Naive thymus-derived CD4-positive, alpha-beta T cell (primary cell): ENCODE measurements at regions of chr3 and their contacts with region 1.

Region 1: GRCh38 chr3:9792405-9793160 is at the starts of genes ARPC4 and TADA3:
- DNase-seq: peak; percentile 83 to 96 (median 93)
- ATAC-seq: peak; percentile 92
- H3K4me3 ChIP-seq: peak within 1 kb of the TSS; percentile 81
- H3K4me3 Mint-ChIP-seq: peak within 1 kb of the TSS; percentile 90 to 100 (median 98)
- H3K27ac ChIP-seq: peak within 1 kb of the TSS; percentile 98
- H3K27ac Mint-ChIP-seq: peak within 1 kb of the TSS; percentile 97 to 100 (median 99)
- H3K4me1 ChIP-seq: peaks cover 47% of the 10 kb centered on the region in 2 donors
- H3K4me1 Mint-ChIP-seq: peaks cover 45 to 75% (median 63%) of the 10 kb centered on the region in 7 donors
- H3K27me3 ChIP-seq: no peaks in the 10 kb centered on the region
- H3K27me3 Mint-ChIP-seq: no peaks in the 10 kb centered on the region
- total RNA-seq, gene ARPC4: 128 to 273 (median 129) TPM
- total RNA-seq, gene TADA3: 31.6 to 67.4 (median 36.8) TPM

Region 2: GRCh38 chr3:9503283-9503682 is 289.3 kb before region 1 on chr3:
- CTCF ChIA-PET with region 1: no interaction called
- POLR2A ChIA-PET with region 1: no interaction called
- intact Hi-C with region 1: loop called in 1 of 2 experiments (anchors 10 kb)
- DNase-seq: peak; percentile 38 to 71 (median 60)
- ATAC-seq: peak; percentile 71
- H3K4me3 ChIP-seq: no peak overlapping the region
- H3K4me3 Mint-ChIP-seq: no peak overlapping the region
- H3K27ac ChIP-seq: no peak overlapping the region
- H3K27ac Mint-ChIP-seq: no peak overlapping the region
- H3K4me1 ChIP-seq: peaks cover 7 to 11% of the 10 kb centered on the region in 2 donors
- H3K4me1 Mint-ChIP-seq: peaks cover 0 to 9% (median 5%) of the 10 kb centered on the region in 7 donors
- H3K27me3 ChIP-seq: peaks cover 5 to 15% of the 10 kb centered on the region in 2 donors
- H3K27me3 Mint-ChIP-seq: peaks cover 28 to 44% (median 34%) of the 10 kb centered on the region in 5 donors

Region 3: DNA sequence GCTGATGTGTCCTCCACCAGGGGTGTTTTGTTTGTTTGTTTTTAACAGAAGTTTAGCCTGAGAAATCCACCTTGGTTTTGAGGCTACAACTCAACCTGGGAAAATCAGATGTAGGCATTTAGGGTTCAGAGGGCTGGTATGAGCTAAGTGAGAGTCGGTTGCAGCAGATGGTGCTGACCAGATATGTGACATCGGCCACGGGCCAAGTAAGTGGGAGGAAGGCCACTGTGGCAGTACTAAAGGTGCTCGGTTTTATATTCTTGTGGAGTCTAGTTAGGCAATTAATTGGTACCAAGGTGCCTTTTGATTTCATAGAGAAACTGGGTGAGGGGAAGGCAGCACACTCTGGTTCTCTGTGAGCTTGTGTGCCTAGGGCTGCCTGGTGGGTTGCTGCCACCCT is 132.7 kb before region 1 on chr3:
- CTCF ChIA-PET with region 1: no interaction called
- POLR2A ChIA-PET with region 1: no interaction called
- intact Hi-C with region 1: no loop called
- DNase-seq: no peak
- ATAC-seq: no peak
- H3K4me3 ChIP-seq: no peak overlapping the region
- H3K4me3 Mint-ChIP-seq: no peak overlapping the region
- H3K27ac ChIP-seq: no peak overlapping the region
- H3K27ac Mint-ChIP-seq: peak overlapping the region in 1 of 9 donors; percentile 31
- H3K4me1 ChIP-seq: no peaks in the 10 kb centered on the region
- H3K4me1 Mint-ChIP-seq: peaks cover 6 to 43% (median 26%) of the 10 kb centered on the region in 7 donors
- H3K27me3 ChIP-seq: no peaks in the 10 kb centered on the region
- H3K27me3 Mint-ChIP-seq: no peaks in the 10 kb centered on the region

Region 4: GRCh38 chr3:9769426-9770275 is 22.9 kb before region 1 on chr3 and contains the start of gene CAMK1:
- CTCF ChIA-PET with region 1: no interaction called
- POLR2A ChIA-PET with region 1: interaction called, 7 read pairs
- intact Hi-C with region 1: loop called in 1 of 2 experiments (anchors 1 kb)
- DNase-seq: peak in 8 of 9 donors; percentile 31 to 82 (median 49)
- ATAC-seq: peak; percentile 90
- H3K4me3 ChIP-seq: peak within 1 kb of the TSS; percentile 49
- H3K4me3 Mint-ChIP-seq: peak within 1 kb of the TSS; percentile 34 to 87 (median 68)
- H3K27ac ChIP-seq: peak within 1 kb of the TSS; percentile 43
- H3K27ac Mint-ChIP-seq: peak within 1 kb of the TSS; percentile 24 to 87 (median 57)
- H3K4me1 ChIP-seq: peaks cover 8 to 13% of the 10 kb centered on the region in 2 donors
- H3K4me1 Mint-ChIP-seq: peaks cover 13 to 45% (median 24%) of the 10 kb centered on the region in 7 donors
- H3K27me3 ChIP-seq: no peaks in the 10 kb centered on the region
- H3K27me3 Mint-ChIP-seq: peaks cover 0 to 3% (median 0%) of the 10 kb centered on the region in 5 donors
- total RNA-seq, gene CAMK1: 2.1 to 36.3 (median 2.5) TPM

Region 5: DNA sequence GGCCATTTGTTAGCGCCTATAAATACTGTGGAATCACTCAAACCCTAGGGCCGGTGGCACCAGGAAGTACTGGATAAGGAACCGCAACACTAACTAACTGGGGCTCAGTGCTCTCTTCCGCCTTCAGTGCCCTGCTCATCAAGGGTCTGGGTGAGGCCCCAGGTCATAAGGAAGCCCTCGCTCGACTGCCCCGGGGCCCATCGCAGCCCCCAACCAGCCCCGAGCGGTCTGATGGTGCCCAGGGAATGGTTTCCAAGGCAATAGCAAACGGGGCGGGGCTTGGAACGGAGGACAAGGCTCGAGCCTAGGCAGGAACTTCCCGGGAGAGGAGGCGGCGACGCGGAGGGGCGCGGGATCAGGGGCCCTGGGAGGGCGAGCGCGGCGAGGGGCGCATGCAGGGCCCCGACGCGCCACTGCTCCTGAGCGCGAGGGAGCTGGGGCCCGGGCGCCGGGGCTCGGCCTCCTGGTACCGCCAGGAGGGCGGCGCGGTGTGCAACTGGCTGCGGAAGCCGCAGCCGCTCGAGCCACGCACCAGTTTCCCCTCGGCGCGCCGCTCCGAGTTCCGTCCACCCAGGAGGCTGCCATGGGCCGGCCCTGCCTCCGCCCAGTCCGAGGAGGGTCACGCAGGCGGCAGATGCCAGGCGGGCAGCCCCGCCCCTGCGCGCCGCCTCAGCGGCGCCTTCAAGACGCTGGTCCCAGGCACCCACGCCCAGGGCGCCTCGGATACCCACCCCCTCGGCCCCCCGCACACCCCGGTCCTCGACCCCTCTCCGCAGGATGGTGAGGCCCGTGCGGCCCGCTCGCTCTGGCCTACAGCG is 17.2 kb after region 1 on chr3 and contains the start of gene TTLL3:
- CTCF ChIA-PET with region 1: interaction called, 7 read pairs
- POLR2A ChIA-PET with region 1: interaction called, 61 read pairs
- intact Hi-C with region 1: loop called (anchors 1 kb)
- DNase-seq: peak; percentile 33 to 50 (median 43)
- ATAC-seq: peak; percentile 76
- H3K4me3 ChIP-seq: peak within 1 kb of the TSS; percentile 76
- H3K4me3 Mint-ChIP-seq: peak within 1 kb of the TSS; percentile 89 to 96 (median 92)
- H3K27ac ChIP-seq: peak within 1 kb of the TSS; percentile 90
- H3K27ac Mint-ChIP-seq: peak within 1 kb of the TSS; percentile 92 to 98 (median 96)
- H3K4me1 ChIP-seq: peaks cover 21 to 28% of the 10 kb centered on the region in 2 donors
- H3K4me1 Mint-ChIP-seq: peaks cover 31 to 41% (median 38%) of the 10 kb centered on the region in 7 donors
- H3K27me3 ChIP-seq: no peaks in the 10 kb centered on the region
- H3K27me3 Mint-ChIP-seq: no peaks in the 10 kb centered on the region
- total RNA-seq, gene TTLL3: 54.9 to 106 (median 68.0) TPM

Region 6: GRCh38 chr3:10010486-10011465 is 218.2 kb after region 1 on chr3:
- CTCF ChIA-PET with region 1: no interaction called
- POLR2A ChIA-PET with region 1: no interaction called
- intact Hi-C with region 1: loop called in 1 of 2 experiments (anchors 5 kb)
- DNase-seq: peak; percentile 25 to 91 (median 46)
- ATAC-seq: peak; percentile 90
- H3K4me3 ChIP-seq: peak overlapping the region; percentile 44
- H3K4me3 Mint-ChIP-seq: peak overlapping the region; percentile 24 to 81 (median 70)
- H3K27ac ChIP-seq: peak overlapping the region; percentile 9
- H3K27ac Mint-ChIP-seq: peak overlapping the region in 2 of 9 donors; percentile 28 to 57
- H3K4me1 ChIP-seq: peaks cover 0 to 14% of the 10 kb centered on the region in 2 donors
- H3K4me1 Mint-ChIP-seq: peaks cover 15 to 28% (median 19%) of the 10 kb centered on the region in 7 donors
- H3K27me3 ChIP-seq: no peaks in the 10 kb centered on the region
- H3K27me3 Mint-ChIP-seq: peaks cover 0 to 19% (median 14%) of the 10 kb centered on the region in 5 donors

Region 7: DNA sequence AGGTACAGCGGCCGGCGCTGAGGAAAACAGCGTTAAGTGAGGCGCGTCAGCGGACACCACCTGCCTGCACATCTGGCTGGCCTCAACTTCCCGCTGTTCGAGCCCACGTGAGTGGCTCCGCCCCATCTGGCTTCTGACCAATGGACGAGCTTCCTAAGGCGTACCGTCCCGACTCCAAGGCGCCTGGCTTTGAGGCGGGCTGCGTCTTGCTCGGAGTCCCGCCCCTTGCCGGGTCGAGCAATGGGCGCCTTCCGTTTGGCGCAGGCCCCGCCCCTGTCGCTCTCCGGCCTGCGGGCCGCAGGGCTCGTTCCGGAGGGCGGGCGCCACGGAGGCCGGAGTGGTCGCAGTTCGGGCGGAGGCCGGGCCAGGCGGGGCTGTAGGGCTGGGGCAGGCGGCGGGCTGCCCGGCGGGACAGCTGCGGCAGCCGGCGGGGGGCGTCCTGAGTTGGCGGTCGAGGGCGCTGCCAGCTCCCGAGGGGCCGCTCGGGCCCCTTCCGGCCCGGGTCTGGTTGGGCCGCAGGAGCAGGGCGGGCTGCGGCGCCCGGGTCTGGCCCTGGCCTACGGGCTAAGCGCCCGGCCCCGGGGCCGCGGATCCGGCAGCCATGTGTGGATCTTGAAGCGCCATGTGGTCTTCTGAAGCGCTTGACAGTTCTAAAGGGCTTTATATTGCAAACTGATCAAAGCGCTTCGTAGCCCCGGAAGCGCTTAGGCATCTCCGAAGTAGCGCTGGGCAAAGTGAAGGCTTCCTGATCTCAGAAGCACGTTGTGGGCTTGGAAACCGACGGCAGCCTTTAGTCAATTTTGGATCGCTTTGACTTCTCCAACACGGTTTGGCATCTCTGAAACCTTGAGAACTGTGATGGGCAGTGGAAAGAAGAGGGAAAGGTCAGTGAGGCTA is 455.8 kb after region 1 on chr3 and contains the start of gene TATDN2:
- CTCF ChIA-PET with region 1: no interaction called
- POLR2A ChIA-PET with region 1: interaction called, 3 read pairs
- intact Hi-C with region 1: loop called (anchors 1 to 2 kb)
- DNase-seq: peak; percentile 80 to 91 (median 88)
- ATAC-seq: peak; percentile 98
- H3K4me3 ChIP-seq: peak within 1 kb of the TSS; percentile 99
- H3K4me3 Mint-ChIP-seq: peak within 1 kb of the TSS; percentile 96 to 100 (median 99)
- H3K27ac ChIP-seq: peak within 1 kb of the TSS; percentile 80
- H3K27ac Mint-ChIP-seq: peak within 1 kb of the TSS; percentile 91 to 97 (median 95)
- H3K4me1 ChIP-seq: peaks cover 28 to 30% of the 10 kb centered on the region in 2 donors
- H3K4me1 Mint-ChIP-seq: peaks cover 44 to 63% (median 52%) of the 10 kb centered on the region in 7 donors
- H3K27me3 ChIP-seq: no peaks in the 10 kb centered on the region
- H3K27me3 Mint-ChIP-seq: no peaks in the 10 kb centered on the region
- total RNA-seq, gene TATDN2: 52.9 to 88.8 (median 71.6) TPM